Common myeloid progenitor, CD34-positive (primary cell): ENCODE measurements at regions of chr17 and their contacts with region 1.

Region 1: GRCh38 chr17:1229432-1229899 is 40.8 kb upstream of the BHLHA9 start:
- DNase-seq: peak; percentile 56 to 87 (median 79)
- H3K4me3 ChIP-seq: peak overlapping the region; percentile 33 to 76 (median 66)
- H3K27ac ChIP-seq: no peak overlapping the region
- H3K4me1 ChIP-seq: peaks cover 0 to 29% (median 27%) of the 10 kb centered on the region in 4 experiments
- H3K27me3 ChIP-seq: peaks cover 0 to 36% (median 8%) of the 10 kb centered on the region in 5 experiments

Region 2: DNA sequence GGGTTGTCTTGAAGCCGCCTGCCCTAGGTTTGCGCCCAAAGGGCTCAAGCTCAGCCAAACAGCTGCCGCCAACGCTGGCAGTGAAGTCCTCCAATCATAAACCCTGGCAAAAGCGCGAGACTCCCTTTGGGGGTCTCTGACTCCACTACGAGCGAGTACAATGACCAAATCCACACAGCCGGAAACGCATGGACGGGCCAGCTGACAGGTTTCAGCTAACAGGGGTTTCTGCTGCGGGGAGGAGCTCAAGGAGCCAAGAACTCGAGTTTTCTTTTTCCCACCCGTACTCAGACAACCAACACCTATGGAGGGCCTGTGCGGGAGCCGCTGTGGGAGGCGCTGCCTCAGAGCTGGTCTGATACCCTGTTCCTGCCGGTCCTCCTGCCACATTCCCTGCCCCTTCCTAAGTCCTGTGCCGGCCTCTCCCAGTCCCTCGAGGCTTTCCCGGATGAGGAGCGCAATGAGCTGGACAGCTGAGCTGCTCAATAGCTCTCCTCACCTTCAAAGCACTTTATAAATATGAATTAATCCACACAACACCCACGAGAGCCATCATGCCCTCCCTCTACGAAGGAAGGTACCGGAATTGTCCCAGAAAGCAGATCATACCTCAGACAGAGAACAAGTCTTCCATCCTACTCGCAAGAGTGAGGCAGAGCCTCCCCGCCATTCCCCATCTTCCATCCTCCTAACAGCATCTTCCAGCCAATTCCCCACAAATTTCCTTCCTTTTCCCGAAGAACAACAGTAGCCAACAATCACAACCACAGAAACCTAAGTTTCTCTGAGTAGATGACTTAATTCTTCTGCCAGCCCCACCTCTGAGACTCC is 55.8 kb before region 1 on chr17:
- CTCF ChIA-PET with region 1: no interaction called
- POLR2A ChIA-PET with region 1: no interaction called
- DNase-seq: no peak
- H3K4me3 ChIP-seq: no peak overlapping the region
- H3K27ac ChIP-seq: no peak overlapping the region
- H3K4me1 ChIP-seq: peaks cover 0 to 30% (median 20%) of the 10 kb centered on the region in 4 experiments
- H3K27me3 ChIP-seq: peaks cover 0 to 9% (median 0%) of the 10 kb centered on the region in 5 experiments

Region 3: GRCh38 chr17:1212946-1213345 is 16.5 kb before region 1 on chr17:
- CTCF ChIA-PET with region 1: interaction called, 11 read pairs
- POLR2A ChIA-PET with region 1: interaction called, 3 read pairs
- DNase-seq: no peak
- H3K4me3 ChIP-seq: no peak overlapping the region
- H3K27ac ChIP-seq: no peak overlapping the region
- H3K4me1 ChIP-seq: peaks cover 0 to 10% (median 3%) of the 10 kb centered on the region in 4 experiments
- H3K27me3 ChIP-seq: no peaks in the 10 kb centered on the region